Heart right ventricle (tissue), 16 donors: ENCODE measurements at regions of chr20 and their contacts with region 1.

Region 1: DNA sequence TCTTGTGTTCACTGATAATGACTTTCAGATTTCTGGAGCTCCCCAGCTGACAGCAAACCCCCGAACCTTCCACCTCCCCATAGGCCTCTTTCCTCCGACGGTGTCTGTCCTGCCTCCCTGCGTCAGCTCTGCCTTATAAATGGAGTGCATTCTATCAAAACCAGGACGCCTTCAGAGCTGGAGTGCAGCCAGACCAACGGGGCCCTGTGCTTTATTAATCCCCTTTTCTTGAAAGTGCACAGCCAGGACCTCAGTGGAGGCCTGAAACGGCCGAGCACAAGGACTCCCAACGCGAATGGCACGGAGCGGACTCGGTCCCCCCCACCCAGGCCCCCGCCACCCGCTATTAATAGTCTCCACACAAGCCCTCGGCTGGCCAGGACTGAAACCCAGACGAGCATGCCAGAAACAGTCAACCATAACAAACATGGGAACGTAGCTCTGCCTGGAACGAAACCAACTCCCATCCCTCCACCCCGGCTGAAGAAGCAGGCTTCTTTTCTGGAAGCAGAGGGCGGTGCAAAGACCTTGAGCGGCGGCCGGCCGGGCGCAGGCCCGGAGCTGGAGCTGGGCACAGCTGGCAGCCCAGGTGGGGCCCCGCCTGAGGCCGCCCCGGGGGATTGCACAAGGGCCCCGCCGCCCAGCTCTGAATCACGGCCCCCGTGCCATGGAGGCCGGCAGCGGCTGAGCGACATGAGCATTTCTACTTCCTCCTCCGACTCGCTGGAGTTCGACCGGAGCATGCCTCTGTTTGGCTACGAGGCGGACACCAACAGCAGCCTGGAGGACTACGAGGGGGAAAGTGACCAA is 42.3 kb upstream of the NAA20 start:
- DNase-seq: peak; percentile 85 to 93
- ATAC-seq: peak; percentile 73 to 93 (median 82)
- H3K4me3 ChIP-seq: peak overlapping the region; percentile 46 to 71 (median 59)
- H3K27ac ChIP-seq: peak overlapping the region; percentile 88 to 97 (median 93)
- H3K4me1 ChIP-seq: peaks cover 26 to 97% (median 74%) of the 10 kb centered on the region in 9 donors
- H3K27me3 ChIP-seq: no peaks in the 10 kb centered on the region
- CTCF ChIP-seq: peak in 1 of 9 donors; percentile 12

Region 2: DNA sequence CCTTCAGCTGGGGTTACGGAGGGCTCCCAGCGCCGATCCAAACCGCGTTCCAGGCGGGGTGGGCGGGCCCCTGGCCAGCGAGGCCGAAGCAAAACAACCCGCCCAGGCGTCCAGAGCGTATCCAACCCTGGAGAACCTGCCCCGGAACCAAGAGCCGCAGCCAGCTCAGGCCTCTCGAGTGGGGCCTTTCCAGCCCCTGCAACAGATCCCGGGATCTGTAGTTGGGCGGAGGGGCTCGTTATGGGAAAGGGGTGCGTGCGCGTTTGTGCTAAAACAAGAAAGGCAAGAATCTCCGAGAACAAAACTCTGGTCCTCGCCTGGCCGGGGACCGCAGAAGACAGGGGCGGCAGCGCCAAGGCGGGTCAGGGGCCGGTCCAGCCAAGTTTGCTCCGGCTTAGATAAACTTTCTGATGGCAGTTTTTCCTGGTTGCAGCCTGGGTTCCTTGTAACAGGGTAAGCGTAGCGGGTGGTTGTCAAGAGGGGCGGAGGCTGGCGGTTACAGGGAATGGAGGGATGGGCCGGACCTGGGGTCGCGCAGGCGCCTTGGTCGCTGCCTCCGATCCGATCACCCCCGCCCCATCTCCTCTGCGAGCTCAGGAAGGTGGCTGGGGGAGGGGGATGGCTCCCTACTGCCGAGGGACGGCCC is 217.2 kb before region 1 on chr20:
- intact Hi-C with region 1: loop called in 1 of 10 experiments (anchors 5 kb)
- DNase-seq: peak; percentile 91 to 94
- ATAC-seq: peak; percentile 86 to 93 (median 92)
- H3K4me3 ChIP-seq: peak overlapping the region; percentile 53 to 95 (median 71)
- H3K27ac ChIP-seq: peak overlapping the region; percentile 91 to 100 (median 94)
- H3K4me1 ChIP-seq: peaks cover 15 to 50% (median 43%) of the 10 kb centered on the region in 9 donors
- H3K27me3 ChIP-seq: peaks cover 0 to 8% (median 0%) of the 10 kb centered on the region in 7 donors
- CTCF ChIP-seq: no peak

Region 3: DNA sequence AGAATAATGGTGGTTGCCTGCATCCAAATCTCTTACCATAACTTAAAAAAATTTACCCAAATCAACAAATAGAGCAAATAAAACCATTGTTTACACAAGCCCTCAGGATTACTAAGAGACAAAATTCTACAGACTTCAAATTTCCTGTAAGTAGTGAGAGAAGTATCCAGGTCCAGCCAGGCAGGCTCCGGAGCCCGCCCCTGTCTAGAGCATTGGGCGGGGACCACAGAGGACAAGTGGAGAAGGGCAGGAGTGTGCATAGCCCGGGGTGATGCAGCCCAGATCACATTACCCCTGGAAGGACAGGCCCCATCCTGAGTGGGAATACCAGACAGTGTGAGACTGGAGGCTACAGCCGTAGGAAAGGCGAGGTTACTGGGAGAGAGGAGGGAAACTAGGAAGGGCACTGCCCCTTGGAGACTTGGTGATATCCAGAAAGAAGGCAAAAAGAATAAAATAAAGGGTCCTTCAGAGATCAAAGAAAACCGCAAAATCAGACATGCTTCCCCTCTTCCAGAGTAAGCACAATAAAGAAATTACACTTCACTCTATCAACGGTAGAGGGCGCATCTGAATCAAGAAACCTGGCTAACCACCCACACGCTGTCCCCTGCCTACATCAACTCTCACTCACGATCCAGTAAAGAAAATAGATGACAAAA is 190.2 kb before region 1 on chr20:
- intact Hi-C with region 1: loop called in 1 of 10 experiments (anchors 5 kb)
- DNase-seq: peak; percentile 31 to 81
- ATAC-seq: peak; percentile 67 to 89 (median 82)
- H3K4me3 ChIP-seq: peak overlapping the region in 1 of 10 donors; percentile 1
- H3K27ac ChIP-seq: peak overlapping the region; percentile 32 to 91 (median 76)
- H3K4me1 ChIP-seq: peaks cover 28 to 67% (median 58%) of the 10 kb centered on the region in 9 donors
- H3K27me3 ChIP-seq: no peaks in the 10 kb centered on the region
- CTCF ChIP-seq: peak; percentile 59 to 87 (median 78)

Region 4: DNA sequence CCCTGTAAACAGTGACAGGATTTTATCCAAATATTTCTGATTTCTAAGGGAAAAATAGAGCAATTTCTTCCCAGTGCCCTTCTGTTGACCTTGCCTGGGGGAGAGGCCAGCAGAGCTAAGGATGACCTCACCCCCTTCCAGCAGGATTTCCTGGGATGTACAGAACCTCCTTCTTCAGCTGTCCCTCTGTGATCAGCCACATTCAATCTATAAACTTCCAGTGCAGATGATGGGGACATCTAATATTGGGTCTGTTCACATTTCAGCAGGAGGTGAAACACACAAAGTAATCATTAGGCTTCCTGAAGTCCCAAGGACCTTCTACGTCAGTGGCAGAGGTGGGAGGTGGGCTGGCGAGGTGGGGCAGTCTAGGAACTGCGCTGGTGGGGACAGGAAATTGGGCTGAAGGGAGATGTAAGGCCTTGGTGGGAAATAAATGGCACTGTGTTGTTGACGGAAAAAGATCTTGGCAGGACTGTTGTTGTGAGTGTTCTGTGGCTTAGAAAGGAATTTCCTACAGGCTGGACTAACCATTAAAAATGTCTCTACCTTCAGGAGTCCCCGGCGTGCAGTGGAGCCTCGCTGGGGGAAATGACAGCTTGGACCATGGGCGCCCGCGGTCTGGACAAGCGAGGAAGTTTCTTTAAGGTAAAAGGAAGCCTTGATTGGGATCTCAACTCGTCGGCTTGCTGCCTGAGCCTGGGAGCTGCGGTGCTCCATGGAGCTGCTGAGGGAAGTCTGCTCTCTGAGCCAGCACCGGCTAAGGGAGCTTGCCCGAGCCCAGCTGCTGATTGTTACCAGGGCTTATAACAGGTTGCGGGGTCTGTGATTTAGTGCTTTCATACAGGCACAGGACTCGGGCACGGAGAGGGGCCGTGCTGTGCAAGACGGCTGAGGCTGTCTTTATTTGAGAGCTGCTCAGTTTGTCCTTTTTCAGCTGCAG is 85.5 kb before region 1 on chr20:
- intact Hi-C with region 1: loop called in 2 of 10 experiments (anchors 5 kb)
- DNase-seq: peak; percentile 66 to 84
- ATAC-seq: peak; percentile 70 to 86 (median 80)
- H3K4me3 ChIP-seq: peak overlapping the region in 9 of 10 donors; percentile 30 to 58 (median 54)
- H3K27ac ChIP-seq: peak overlapping the region; percentile 72 to 98 (median 88)
- H3K4me1 ChIP-seq: peaks cover 29 to 97% (median 67%) of the 10 kb centered on the region in 9 donors
- H3K27me3 ChIP-seq: no peaks in the 10 kb centered on the region
- CTCF ChIP-seq: no peak

Region 5: GRCh38 chr20:19901226-19901625 is 73.6 kb before region 1 on chr20:
- intact Hi-C with region 1: no loop called
- DNase-seq: no peak
- ATAC-seq: peak in 1 of 8 donors; percentile 33
- H3K4me3 ChIP-seq: no peak overlapping the region
- H3K27ac ChIP-seq: peak overlapping the region in 2 of 10 donors; percentile 19 to 48
- H3K4me1 ChIP-seq: peaks cover 0 to 63% (median 30%) of the 10 kb centered on the region in 9 donors
- H3K27me3 ChIP-seq: no peaks in the 10 kb centered on the region
- CTCF ChIP-seq: no peak

Region 6: GRCh38 chr20:19921284-19921793 is 53.5 kb before region 1 on chr20:
- intact Hi-C with region 1: loop called in 1 of 10 experiments (anchors 10 kb)
- DNase-seq: peak; percentile 32 to 65
- ATAC-seq: peak; percentile 77 to 92 (median 84)
- H3K4me3 ChIP-seq: peak overlapping the region in 3 of 10 donors; percentile 15 to 36 (median 25)
- H3K27ac ChIP-seq: peak overlapping the region in 9 of 10 donors; percentile 22 to 84 (median 64)
- H3K4me1 ChIP-seq: peaks cover 14 to 89% (median 69%) of the 10 kb centered on the region in 9 donors
- H3K27me3 ChIP-seq: no peaks in the 10 kb centered on the region
- CTCF ChIP-seq: no peak

Region 7: DNA sequence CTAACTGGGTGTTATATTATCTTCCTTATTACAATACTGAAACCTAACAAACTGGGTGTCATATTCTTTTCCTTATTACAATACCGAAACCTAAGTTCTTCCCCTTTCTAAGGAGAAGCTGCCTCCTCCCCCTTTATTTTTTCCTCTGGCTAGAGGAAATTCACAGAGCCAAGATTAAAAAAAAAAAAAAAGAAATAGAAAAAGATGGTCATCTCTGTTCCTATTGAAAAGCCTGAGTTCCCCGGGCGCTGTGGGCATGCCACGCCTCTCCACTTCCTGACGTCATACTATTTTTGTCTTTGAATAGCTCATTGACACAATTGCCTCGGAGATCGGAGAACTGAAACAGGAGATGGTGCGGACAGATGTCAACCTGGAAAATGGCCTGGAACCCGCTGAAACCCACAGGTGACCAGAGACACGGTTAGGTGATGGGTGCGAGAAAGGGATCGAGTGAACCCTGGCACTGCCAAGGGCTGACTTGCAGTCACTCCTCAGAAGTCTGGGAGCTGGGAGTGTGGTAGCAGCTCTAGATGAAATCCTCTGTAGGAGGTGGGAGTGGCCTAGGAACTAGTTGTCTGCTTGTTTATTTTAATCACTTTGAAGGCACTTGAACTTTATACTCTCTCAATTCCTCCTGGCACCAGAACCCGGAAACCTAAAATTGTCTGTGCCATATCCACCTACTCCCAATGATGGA is 39.9 kb before region 1 on chr20:
- intact Hi-C with region 1: loop called in 5 of 10 experiments (anchors 5 kb)
- DNase-seq: peak; percentile 51 to 86
- ATAC-seq: peak; percentile 57 to 83 (median 72)
- H3K4me3 ChIP-seq: peak overlapping the region in 8 of 10 donors; percentile 2 to 53 (median 44)
- H3K27ac ChIP-seq: peak overlapping the region; percentile 11 to 89 (median 76)
- H3K4me1 ChIP-seq: peaks cover 5 to 100% (median 88%) of the 10 kb centered on the region in 9 donors
- H3K27me3 ChIP-seq: no peaks in the 10 kb centered on the region
- CTCF ChIP-seq: no peak

Region 8: GRCh38 chr20:19944772-19945459 is 29.9 kb before region 1 on chr20:
- intact Hi-C with region 1: loop called in 2 of 10 experiments (anchors 5 kb)
- DNase-seq: no peak
- ATAC-seq: peak in 7 of 8 donors; percentile 53 to 77 (median 67)
- H3K4me3 ChIP-seq: no peak overlapping the region
- H3K27ac ChIP-seq: peak overlapping the region; percentile 20 to 89 (median 74)
- H3K4me1 ChIP-seq: peaks cover 20 to 91% (median 71%) of the 10 kb centered on the region in 9 donors
- H3K27me3 ChIP-seq: no peaks in the 10 kb centered on the region
- CTCF ChIP-seq: no peak